ENCODE measurements at regions of chr7 and their contacts with region 1.

Region 1: GRCh38 chr7:23712368-23713284 is 2.6 kb downstream of the STK31 start:
- DNase-seq: peak in 1 of 42 donors; percentile 19

Region 2: DNA sequence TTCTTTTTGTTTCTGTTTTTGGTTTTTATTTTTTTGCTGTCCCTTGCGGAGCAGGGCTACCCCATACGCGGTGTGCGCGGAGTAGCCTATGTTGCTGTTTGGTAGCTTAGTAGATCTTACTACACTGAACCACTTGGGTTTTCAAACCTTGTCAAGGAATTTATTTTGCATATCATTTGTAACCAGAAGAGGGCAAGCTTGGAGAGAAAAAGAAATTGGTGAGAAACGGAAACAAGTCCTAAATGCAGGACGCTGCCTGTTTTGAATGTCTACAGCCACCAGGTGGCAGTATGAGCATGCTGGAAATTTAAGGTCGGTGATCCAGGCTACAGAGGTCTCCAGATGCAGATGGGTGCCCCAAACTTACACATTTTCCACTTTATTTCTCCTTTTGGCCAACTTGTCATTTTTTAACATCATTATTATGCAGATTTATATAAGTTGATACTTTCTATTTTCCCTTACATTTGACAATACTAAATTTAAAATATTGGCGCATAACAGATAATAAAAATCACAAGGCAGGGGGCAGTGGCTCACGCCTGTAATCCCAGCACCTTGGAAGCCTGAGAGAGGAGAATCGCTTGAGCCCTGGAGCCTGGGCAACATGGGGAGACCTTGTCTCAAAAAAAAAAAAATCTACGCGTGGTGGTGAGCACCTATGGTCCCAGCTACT is 165.6 kb before region 1 on chr7:
- intact Hi-C with region 1: loop called (anchors 10 kb)
- DNase-seq: peak; percentile 43 to 91 (median 80)

Region 3: GRCh38 chr7:23570592-23571200 is 141.9 kb before region 1 on chr7:
- intact Hi-C with region 1: loop called (anchors 2 kb)
- DNase-seq: peak; percentile 9 to 89 (median 76)

Region 4: GRCh38 chr7:24052572-24053223 is 340.1 kb after region 1 on chr7:
- intact Hi-C with region 1: no loop called
- DNase-seq: no peak

Measured in head of caudate nucleus (tissue), 42 donors.